Kidney (tissue), 22 donors: ENCODE measurements at regions of chr7 and their contacts with region 1.

Region 1: GRCh38 chr7:38107486-38107893 is 70.6 kb upstream of the STARD3NL start:
- DNase-seq: peak in 4 of 5 donors; percentile 59 to 83 (median 72)
- H3K4me3 ChIP-seq: no peak overlapping the region
- H3K27ac ChIP-seq: no peak overlapping the region
- H3K4me1 ChIP-seq: no peaks in the 10 kb centered on the region
- H3K27me3 ChIP-seq: no peaks in the 10 kb centered on the region
- CTCF ChIP-seq: peak; percentile 84

Region 2: DNA sequence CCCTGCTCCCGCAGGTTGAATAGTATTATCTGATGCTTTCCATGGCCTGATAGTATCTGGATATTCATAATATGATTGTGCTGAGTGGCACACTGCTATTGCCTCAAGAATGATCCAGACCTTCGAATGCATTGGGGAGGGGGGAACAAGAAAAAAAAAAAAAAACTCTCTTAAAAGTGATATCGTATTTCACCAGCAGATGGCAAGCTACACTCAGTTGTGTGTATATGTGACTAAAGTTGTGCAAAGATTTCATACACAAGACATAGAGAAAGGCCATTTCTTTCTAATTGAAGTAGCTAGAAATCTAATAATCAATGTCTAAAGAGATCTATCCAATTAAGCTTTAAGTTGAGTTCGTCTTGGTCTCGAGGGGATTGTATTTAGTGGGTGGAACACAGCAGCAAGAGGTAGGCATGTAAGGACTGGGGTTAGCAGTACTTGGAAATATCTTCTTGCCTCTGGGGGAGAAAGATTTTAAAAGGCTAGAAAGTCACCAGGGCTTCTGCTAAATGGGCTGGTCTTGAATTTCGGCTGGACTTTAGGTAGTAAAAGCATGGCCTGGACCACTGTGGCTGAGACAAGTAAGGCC is 206.2 kb before region 1 on chr7:
- intact Hi-C with region 1: loop called (anchors 10 kb)
- DNase-seq: peak in 2 of 5 donors; percentile 63 to 76
- H3K4me3 ChIP-seq: peak overlapping the region in 1 of 3 donors; percentile 5
- H3K27ac ChIP-seq: peak overlapping the region in 1 of 2 donors; percentile 35
- H3K4me1 ChIP-seq: peaks cover 2 to 12% (median 4%) of the 10 kb centered on the region in 3 donors
- H3K27me3 ChIP-seq: no peaks in the 10 kb centered on the region
- CTCF ChIP-seq: peak; percentile 54

Region 3: DNA sequence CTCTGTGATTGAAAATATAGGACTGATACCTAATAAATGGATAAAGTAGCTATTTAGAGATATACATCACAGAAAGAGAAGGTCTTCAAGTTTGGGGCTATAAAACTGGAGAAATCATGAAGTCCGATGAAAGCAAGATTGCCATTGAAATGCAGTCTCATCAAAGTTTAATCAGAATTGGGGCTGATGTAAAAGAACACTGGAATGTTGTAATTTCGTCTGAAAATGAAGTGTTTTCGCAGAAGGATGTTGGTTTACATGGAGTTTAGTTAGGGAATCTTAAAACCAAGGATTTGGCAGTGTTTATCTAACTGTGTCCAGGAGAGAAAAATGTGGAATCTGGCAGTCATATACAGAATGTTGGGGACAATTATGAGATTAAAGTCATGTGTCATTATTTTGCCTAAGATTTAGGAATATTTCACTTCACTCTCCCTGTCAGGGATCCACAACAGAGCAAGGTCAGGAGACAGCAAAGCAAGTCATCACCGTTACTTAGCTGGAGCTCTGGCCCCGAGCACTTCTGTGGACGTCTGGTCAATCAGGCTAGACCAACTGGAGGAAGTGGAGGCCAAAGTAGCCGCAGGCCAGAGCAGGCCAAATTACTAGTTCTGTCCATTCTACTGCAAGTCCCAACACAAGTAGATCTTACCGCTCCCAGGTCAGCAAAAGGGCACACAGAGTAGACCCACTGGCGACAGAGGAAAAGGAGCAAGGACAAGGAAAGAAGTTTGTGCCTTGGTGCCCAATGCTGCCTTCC is 150.1 kb before region 1 on chr7:
- intact Hi-C with region 1: no loop called
- DNase-seq: no peak
- H3K4me3 ChIP-seq: no peak overlapping the region
- H3K27ac ChIP-seq: no peak overlapping the region
- H3K4me1 ChIP-seq: no peaks in the 10 kb centered on the region
- H3K27me3 ChIP-seq: no peaks in the 10 kb centered on the region
- CTCF ChIP-seq: no peak

Region 4: DNA sequence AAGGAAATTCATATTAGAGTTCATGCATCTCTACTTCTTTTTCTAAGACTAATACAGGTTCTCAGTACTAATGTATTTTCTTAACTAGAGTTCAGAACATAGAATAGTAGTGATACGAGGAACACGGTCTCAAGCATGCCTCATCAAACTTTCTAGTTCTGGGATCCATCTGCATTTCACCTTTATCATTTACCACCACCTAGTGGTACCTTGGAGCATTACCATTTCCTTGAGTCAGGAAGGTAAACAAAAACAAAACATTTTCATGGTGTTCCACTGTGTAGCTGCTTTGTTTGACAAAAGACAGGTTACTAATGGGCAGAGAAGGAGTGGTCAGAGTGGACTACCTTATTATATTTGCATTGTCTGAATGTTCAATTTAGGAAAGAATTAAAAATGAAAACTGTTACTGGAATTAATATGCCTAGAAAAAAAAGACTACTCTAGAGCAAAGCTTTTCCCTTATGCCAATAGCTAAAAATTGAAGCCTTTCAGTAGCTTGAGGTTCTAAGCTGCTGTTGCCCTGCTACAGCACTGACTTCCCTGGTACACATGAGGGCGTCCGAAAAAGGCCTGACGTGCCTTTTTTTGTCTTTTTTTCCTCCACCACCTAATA is 115.1 kb after region 1 on chr7:
- intact Hi-C with region 1: loop called (anchors 10 kb)
- DNase-seq: peak in 2 of 5 donors; percentile 67 to 79
- H3K4me3 ChIP-seq: no peak overlapping the region
- H3K27ac ChIP-seq: no peak overlapping the region
- H3K4me1 ChIP-seq: no peaks in the 10 kb centered on the region
- H3K27me3 ChIP-seq: no peaks in the 10 kb centered on the region
- CTCF ChIP-seq: peak; percentile 93

Region 5: DNA sequence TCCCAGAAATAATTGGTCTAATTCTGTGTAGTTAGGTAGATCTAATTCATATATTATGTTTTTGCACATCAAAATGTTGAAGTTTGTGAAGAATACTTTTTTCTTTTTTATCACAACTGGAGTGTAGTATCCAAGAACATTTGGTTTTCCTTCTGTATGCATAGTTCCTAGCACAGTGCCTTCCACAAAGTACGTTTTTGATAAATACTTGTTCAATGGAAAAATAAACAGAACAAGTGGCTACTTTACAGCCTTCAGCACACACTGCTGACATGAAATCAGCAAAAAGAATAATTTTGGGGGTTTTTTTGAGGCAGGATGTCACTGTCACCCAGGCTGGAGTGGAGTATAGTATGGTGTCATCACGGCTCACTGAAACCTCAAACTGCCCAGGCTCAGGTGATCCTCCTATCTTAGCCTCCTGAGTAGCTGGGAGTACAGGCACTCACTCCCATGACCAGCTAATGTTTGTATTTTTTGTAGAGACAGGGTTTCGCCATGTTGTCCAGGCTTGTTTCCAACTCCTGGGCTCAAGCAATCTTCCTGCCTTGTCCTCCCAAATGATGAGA is 138.0 kb after region 1 on chr7:
- intact Hi-C with region 1: no loop called
- DNase-seq: no peak
- H3K4me3 ChIP-seq: no peak overlapping the region
- H3K27ac ChIP-seq: no peak overlapping the region
- H3K4me1 ChIP-seq: no peaks in the 10 kb centered on the region
- H3K27me3 ChIP-seq: no peaks in the 10 kb centered on the region
- CTCF ChIP-seq: no peak